ENCODE measurements at regions of chr1 and their contacts with region 1.

Region 1: DNA sequence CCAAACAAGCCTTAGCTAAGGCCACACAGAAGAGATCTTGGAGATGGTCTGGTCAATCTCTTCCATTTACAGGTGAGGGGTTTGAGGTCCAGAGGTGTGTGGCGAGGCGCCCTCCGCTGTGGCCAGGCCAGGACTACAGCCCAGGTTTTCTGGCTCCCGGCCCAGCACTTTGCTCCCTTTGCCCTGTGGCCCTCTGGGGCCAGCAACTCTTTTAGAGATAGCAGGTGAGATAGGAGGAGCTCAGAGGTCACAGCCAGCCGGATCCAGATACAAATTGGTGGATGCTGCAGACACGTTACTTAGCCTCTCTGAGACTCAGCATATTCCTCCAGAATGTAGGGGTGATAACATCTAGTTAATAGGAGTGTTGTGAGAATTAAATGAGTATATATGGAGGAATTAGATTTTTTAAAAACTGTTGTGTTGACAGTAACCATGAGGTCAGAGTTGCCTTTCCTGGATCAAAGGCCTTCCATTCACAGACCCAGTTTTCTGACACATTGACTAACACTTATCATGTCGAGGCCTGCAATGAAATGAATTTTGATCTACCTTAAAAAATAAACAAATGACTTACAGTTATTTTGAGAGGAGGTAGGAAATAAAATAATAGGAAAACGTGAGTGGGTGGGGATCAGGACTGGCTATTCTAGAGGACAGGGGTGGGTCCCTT is 16.6 kb downstream of the TEX35 start:
- DNase-seq: no peak
- H3K4me3 ChIP-seq: no peak overlapping the region
- CTCF ChIP-seq: no peak

Region 2: GRCh38 chr1:178566187-178566586 is 36.7 kb after region 1 on chr1:
- in situ Hi-C with region 1: no loop called
- DNase-seq: no peak
- H3K4me3 ChIP-seq: no peak overlapping the region
- CTCF ChIP-seq: no peak

Region 3: DNA sequence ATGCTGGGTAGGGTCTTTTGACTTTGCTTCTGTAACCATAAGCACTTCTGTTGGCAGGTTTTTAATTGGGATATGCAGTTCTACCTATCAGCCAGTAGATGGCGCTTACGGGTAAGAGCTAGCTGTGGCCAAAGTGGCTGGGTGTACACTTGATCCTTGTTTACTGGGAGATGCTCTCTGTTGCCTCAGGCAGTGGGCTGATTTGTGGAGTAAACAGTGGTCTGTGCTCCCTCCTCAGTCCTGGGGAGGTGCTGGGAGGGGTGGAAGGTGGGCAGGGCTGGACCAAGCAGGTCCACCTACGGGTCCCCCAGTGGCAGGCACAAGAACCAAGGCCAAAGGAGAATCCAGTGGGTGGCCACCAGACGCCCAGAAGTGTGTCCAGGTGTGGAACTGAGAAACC is 238.9 kb after region 1 on chr1:
- in situ Hi-C with region 1: loop called (anchors 10 kb)
- DNase-seq: no peak
- H3K4me3 ChIP-seq: no peak overlapping the region
- CTCF ChIP-seq: peak; percentile 65

Measured in astrocyte of the cerebellum (primary cell).